Motor neuron (in vitro differentiated cells): ENCODE measurements at regions of chr1 and their contacts with region 1.

Region 1: DNA sequence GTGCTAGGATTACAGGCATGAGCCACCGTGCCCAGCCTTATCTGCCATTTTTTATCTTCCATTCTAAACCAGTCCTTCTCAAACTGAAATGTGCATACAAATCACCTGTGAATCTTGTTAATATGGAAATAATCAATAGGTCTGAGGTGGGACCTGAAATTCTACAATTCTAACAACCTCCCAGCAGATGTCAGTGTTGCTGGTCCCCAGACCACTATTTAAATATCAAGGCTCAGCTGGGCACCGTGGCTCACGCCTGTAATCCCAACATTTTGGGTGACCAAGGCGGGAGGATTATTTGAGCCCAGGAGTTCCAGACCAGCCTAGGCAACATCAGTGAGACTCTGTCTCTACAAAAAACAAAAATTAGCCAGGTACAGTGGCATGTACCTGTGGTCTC is 4.1 kb downstream of the UQCRHL start:
- ATAC-seq: peak in 6 of 8 experiments; percentile 32 to 54 (median 44)
- H3K4me3 ChIP-seq: no peak overlapping the region
- H3K27ac ChIP-seq: no peak overlapping the region
- H3K4me1 ChIP-seq: peaks cover 3 to 22% of the 10 kb centered on the region in 2 donors

Region 2: DNA sequence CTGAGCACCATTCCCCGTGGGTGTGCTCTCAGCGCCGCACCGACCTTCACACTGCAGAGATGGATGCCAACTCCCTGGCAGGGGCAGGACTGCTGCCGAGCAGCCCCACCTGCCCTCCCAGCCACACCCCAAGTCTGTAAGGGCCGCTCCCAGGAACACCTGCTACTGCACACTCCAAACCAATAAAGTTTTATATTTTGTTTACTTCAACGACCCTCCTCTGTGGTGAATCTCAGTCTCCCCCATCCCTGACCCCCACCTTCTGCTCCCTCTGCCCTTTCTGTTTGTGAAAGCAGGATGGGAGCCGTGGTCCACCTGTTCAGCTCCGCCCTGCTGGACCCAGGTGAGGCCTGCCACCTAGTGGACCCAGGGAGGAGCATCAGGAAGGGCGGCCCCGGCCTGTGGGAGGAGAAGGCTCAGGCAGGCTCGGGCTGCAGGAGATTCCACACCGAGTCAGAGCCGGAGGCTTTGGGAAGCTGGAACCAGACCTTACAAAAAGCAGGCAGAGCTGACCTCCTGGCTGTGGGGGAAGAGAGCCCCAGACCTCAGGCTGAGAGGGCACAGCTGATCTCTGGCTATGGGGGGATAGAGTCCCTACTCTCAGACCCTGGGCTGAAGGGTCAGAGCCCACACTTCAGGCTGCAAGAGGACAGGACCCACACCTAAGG is 62.0 kb before region 1 on chr1:
- in situ Hi-C with region 1: no loop called
- ATAC-seq: peak; percentile 62 to 91 (median 86)
- H3K4me3 ChIP-seq: no peak overlapping the region
- H3K27ac ChIP-seq: no peak overlapping the region
- H3K4me1 ChIP-seq: peaks cover 0 to 6% of the 10 kb centered on the region in 2 donors

Region 3: GRCh38 chr1:15949453-15950245 is 146.3 kb after region 1 on chr1:
- in situ Hi-C with region 1: loop called in 2 of 9 experiments (anchors 25 kb)
- ATAC-seq: peak; percentile 58 to 93 (median 89)
- H3K4me3 ChIP-seq: no peak overlapping the region
- H3K27ac ChIP-seq: no peak overlapping the region
- H3K4me1 ChIP-seq: peaks cover 27 to 31% of the 10 kb centered on the region in 2 donors

Region 4: DNA sequence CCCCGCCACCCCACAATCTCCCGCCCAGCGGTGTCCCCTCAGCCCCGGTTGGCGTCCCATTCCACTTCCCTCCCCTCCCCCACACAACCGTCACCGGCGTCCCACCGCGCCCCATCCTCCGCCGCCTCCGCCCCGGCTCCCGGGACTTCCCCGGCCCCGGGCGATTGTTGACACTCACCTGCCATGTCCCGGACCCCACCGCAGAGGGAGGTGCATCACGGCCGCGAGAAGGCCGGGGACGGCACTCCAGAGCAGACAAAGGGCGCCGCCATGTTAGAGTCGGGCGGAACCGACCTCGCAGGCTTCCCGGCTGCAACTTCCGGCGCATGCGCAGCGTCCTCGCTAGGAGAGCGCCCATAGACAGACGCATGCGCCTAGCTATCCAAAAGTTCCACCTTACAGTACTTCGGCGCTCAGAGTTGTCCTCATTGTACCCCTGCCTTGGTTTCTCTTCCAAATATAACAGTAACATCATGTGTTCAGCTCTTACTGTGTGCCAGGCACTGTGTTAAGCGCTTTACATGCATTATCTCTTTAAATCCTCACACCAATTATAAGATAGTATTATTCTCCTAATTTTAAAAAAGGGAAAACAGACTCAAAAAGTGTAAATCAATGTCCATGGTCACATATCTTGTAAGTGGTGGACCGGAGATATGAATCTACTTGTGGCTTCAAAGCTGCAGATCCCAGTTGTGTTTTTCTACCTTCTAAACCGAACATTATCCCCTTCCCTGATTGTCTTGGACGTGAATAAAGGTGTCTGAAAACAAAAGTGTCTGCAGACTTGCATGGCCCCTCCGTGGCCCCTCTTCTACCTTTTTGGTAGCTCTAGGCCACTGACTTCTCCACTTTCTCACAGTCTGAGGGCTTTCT is 172.7 kb after region 1 on chr1 and contains the start of gene ZBTB17:
- in situ Hi-C with region 1: loop called in 3 of 9 experiments (anchors 25 kb)
- ATAC-seq: peak; percentile 87 to 94 (median 92)
- H3K4me3 ChIP-seq: peak within 1 kb of the TSS; percentile 83 to 99 (median 89)
- H3K27ac ChIP-seq: peak within 1 kb of the TSS; percentile 91 to 98
- H3K4me1 ChIP-seq: peaks cover 6 to 8% of the 10 kb centered on the region in 2 donors
- total RNA-seq, gene ZBTB17: 18.2 to 48.9 (median 38.4) TPM